MCF 10A (cell line): ENCODE measurements at regions of chr19 and their contacts with region 1.

Region 1: GRCh38 chr19:21020298-21021227 is at the start of gene ZNF430:
- DNase-seq: peak; percentile 98
- H3K4me3 Mint-ChIP-seq: peak within 1 kb of the TSS; percentile 99
- H3K27ac Mint-ChIP-seq: peak within 1 kb of the TSS; percentile 100
- H3K4me1 Mint-ChIP-seq: peaks cover 24% of the 10 kb centered on the region
- H3K27me3 Mint-ChIP-seq: no peaks in the 10 kb centered on the region
- CTCF ChIP-seq: no peak
- total RNA-seq, gene ZNF430: 12.9 and 13.9 TPM in 2 replicates

Region 2: DNA sequence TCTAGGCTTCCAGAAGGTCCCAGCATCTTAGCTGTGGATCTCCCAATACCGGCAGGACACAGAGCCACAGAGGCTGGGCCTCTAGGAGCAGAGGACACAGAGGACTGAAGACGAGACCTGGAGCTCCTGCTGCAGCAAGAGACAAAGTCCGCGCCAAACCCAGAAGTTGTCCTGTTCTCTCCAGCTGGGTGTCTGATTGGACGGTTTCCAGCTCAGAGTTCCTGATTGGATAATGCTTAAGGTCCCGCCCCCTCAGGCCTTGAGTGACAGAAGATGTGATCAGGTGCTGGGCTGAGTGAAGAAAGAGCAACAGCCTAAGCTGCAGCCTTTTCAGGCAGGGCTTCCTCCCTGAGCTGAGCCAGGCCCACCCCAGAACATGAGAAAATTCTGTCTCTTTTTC is 157.4 kb before region 1 on chr19:
- CTCF ChIA-PET with region 1: no interaction called
- POLR2A ChIA-PET with region 1: no interaction called
- intact Hi-C with region 1: no loop called
- DNase-seq: no peak
- H3K4me3 Mint-ChIP-seq: no peak overlapping the region
- H3K27ac Mint-ChIP-seq: no peak overlapping the region
- H3K4me1 Mint-ChIP-seq: no peaks in the 10 kb centered on the region
- H3K27me3 Mint-ChIP-seq: no peaks in the 10 kb centered on the region
- CTCF ChIP-seq: no peak

Region 3: GRCh38 chr19:20923077-20923871 is 97.3 kb before region 1 on chr19 and contains the start of gene ZNF85:
- CTCF ChIA-PET with region 1: interaction called, 7 read pairs
- POLR2A ChIA-PET with region 1: interaction called, 38 read pairs
- intact Hi-C with region 1: loop called (anchors 5 kb)
- DNase-seq: peak; percentile 94
- H3K4me3 Mint-ChIP-seq: peak within 1 kb of the TSS; percentile 93
- H3K27ac Mint-ChIP-seq: peak within 1 kb of the TSS; percentile 97
- H3K4me1 Mint-ChIP-seq: no peaks in the 10 kb centered on the region
- H3K27me3 Mint-ChIP-seq: no peaks in the 10 kb centered on the region
- CTCF ChIP-seq: no peak
- total RNA-seq, gene ZNF85: 4.9 and 6.9 TPM in 2 replicates

Region 4: DNA sequence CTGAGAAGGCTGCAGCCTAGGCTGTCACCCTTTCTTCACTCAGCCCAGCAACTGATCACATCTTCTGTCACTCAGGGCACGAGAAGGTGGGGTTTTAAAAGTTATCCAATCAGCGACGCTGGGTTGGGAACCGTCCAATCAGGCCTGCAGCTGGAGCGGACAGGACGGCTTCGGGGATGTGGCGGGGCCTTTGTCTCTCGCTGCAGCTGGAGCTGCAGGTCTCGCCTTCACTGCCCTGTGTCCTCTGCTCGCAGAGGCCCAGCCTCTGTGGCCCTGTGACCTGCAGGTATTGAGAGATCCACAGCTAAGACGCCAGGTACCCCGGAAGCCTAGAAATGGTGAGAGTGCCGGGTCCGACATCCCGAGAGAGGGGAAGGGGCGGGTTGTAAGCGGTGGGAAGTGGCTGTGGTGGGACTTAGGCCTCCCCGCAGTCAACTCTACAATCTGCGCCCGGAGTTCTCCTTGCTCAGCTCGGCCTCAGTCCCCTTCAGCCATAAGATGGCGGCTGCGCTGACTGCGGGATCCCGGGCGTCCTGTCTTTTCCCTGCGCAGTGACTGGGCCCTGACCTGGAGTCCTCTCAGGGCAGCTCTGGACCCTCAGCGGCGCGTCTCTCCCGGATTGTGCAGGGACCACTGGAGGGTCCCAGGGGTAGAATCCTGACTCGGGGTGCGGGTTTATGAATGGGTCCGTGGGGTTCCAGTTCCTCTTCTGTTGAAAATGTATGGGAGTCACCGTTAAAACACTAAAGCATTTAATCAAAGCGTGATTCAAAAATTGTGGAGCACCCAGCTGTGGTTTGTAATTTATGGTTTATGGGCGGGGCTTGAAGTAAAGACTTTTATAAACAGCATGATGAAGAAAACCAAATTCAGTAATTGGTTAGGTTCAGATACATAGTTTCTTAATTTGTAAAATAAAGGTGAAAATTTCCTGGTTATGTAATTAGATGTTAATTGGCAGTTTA is 61.7 kb after region 1 on chr19 and contains the start of gene ZNF714:
- CTCF ChIA-PET with region 1: no interaction called
- POLR2A ChIA-PET with region 1: interaction called, 5 read pairs
- intact Hi-C with region 1: loop called (anchors 5 kb)
- DNase-seq: peak; percentile 95
- H3K4me3 Mint-ChIP-seq: peak within 1 kb of the TSS; percentile 94
- H3K27ac Mint-ChIP-seq: peak within 1 kb of the TSS; percentile 96
- H3K4me1 Mint-ChIP-seq: peaks cover 8% of the 10 kb centered on the region
- H3K27me3 Mint-ChIP-seq: no peaks in the 10 kb centered on the region
- CTCF ChIP-seq: no peak
- total RNA-seq, gene ZNF714: 10.0 and 11.0 TPM in 2 replicates

Region 5: DNA sequence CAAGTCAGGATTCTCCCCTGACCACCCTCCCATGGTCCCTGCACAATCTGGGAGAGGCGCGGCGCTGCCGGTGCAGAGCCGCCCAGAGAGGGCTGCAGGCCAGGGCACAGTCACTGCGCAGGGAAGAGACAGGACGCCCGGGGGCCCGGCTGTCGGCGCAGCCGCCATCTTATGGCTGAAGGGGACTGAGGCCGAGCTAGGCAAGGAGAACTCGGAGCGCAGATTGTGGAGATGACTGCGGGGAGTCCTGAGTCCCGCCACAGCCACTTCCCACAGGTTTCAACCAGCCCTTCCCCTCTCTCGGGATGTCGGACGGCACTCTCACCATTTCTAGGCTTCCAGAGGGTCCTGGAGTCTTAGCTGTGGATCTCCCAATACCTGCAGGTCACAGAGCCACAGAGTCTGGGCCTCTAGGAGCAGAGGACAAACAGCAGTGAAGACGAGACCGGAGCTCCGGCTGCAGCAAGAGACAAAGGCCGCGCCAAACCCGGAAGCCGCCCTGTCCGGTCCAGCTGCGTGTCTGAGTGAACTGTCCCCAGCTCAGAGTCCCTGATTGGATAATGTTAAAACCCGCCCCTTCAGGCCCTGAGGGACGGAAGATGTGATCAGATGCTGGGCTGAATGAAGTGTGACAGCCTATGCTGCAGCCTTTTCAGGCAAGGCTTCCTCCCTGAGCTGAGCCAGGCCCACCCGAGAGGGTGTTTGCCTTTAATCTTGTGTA is 308.5 kb after region 1 on chr19 and contains the start of gene ZNF708:
- CTCF ChIA-PET with region 1: no interaction called
- POLR2A ChIA-PET with region 1: interaction called, 4 read pairs
- intact Hi-C with region 1: loop called (anchors 5 kb)
- DNase-seq: peak; percentile 94
- H3K4me3 Mint-ChIP-seq: peak within 1 kb of the TSS; percentile 98
- H3K27ac Mint-ChIP-seq: peak within 1 kb of the TSS; percentile 99
- H3K4me1 Mint-ChIP-seq: peaks cover 5% of the 10 kb centered on the region
- H3K27me3 Mint-ChIP-seq: no peaks in the 10 kb centered on the region
- CTCF ChIP-seq: no peak
- total RNA-seq, gene ZNF708: 5.3 and 7.8 TPM in 2 replicates